CD8-positive, alpha-beta T cell (primary cell): ENCODE measurements at regions of chr1 and their contacts with region 1.

Region 1: DNA sequence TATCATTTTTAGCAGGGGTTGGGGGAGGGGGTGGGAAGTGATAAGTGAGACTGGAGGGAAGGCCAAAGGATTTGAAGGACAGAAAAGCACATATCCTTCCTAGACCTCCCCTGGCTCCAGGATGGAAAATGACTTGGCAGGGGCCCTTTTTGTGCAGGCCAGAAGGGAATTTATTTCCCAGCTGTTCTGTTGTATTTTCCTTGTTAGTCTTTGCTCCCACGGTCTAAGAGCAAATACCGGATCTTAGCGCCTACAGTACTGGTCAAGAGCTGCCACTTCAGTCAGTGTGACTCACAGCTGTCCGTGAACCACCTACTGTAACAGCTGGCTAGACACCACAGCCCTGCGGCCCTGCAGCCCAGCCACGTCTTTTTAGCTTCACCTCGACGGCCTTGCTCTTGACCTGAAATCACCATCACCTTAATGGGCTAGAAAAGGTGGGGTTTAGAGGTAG is 51.0 kb upstream of the ERRFI1 start:
- DNase-seq: no peak
- ATAC-seq: no peak
- H3K4me3 ChIP-seq: no peak overlapping the region
- H3K4me3 Mint-ChIP-seq: no peak overlapping the region
- H3K27ac ChIP-seq: no peak overlapping the region
- H3K27ac Mint-ChIP-seq: no peak overlapping the region
- H3K4me1 ChIP-seq: no peaks in the 10 kb centered on the region
- H3K4me1 Mint-ChIP-seq: no peaks in the 10 kb centered on the region
- H3K27me3 ChIP-seq: peaks cover 0 to 3% of the 10 kb centered on the region in 2 experiments
- H3K27me3 Mint-ChIP-seq: peaks cover 14% of the 10 kb centered on the region
- CTCF ChIP-seq: no peak

Region 2: GRCh38 chr1:8059161-8059622 is 18.0 kb before region 1 on chr1:
- CTCF ChIA-PET with region 1: no interaction called
- POLR2A ChIA-PET with region 1: no interaction called
- intact Hi-C with region 1: loop called in 1 of 2 experiments (anchors 1 kb)
- DNase-seq: no peak
- ATAC-seq: no peak
- H3K4me3 ChIP-seq: no peak overlapping the region
- H3K4me3 Mint-ChIP-seq: no peak overlapping the region
- H3K27ac ChIP-seq: no peak overlapping the region
- H3K27ac Mint-ChIP-seq: no peak overlapping the region
- H3K4me1 ChIP-seq: no peaks in the 10 kb centered on the region
- H3K4me1 Mint-ChIP-seq: no peaks in the 10 kb centered on the region
- H3K27me3 ChIP-seq: no peaks in the 10 kb centered on the region
- H3K27me3 Mint-ChIP-seq: peaks cover 2% of the 10 kb centered on the region
- CTCF ChIP-seq: no peak